Dendritic cell treated with granulocyte-macrophage colony-stimulating factor and Interleukin-4, amounts not matched to agents 40 ng/mL and 50 ng/mL, for 4 days (primary cell): ENCODE measurements at regions of chr11 and their contacts with region 1.

Region 1: GRCh38 chr11:49533204-49533603 is 324.8 kb upstream of the FOLH1 start:
- H3K4me3 Mint-ChIP-seq: no peak overlapping the region
- H3K27ac Mint-ChIP-seq: no peak overlapping the region
- H3K4me1 Mint-ChIP-seq: no peaks in the 10 kb centered on the region
- H3K27me3 Mint-ChIP-seq: no peaks in the 10 kb centered on the region

Region 2: DNA sequence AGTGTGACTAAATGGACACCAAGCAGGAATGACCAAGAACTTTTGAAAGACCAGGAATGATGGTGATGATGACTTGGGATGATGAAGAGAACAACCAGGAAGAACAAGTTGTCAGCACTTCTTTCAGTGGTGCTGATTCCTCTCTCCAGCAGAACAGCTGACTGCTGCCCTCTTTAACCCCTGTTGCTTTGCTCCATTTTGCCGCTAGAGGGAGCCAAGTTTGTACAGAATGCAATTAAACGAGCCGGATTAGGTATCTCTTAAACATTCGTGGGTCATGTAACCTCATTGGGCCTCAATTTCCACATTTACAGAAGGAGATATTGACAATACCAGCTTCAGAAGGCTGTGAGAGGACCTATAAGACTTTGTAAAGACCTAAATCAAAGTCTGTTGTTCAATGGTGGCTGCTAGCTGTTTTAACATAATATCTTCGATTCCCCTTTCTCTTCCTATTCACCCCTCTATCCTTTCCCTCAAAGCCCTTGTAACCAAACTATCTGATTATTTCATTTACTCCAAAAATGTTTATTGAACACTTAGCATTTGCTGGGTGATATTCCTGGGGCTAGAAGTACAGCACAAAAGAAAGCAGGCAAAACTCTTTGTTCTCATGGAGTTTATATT is 1225.3 kb before region 1 on chr11:
- intact Hi-C with region 1: loop called (anchors 5 kb)
- H3K4me3 Mint-ChIP-seq: no peak overlapping the region
- H3K27ac Mint-ChIP-seq: no peak overlapping the region
- H3K4me1 Mint-ChIP-seq: no peaks in the 10 kb centered on the region
- H3K27me3 Mint-ChIP-seq: no peaks in the 10 kb centered on the region